ENCODE measurements at regions of chr1 and their contacts with region 1.

Region 1: GRCh38 chr1:23964790-23965740 is 5.4 kb downstream of the PNRC2 start:
- DNase-seq: no peak
- H3K4me3 Mint-ChIP-seq: peak overlapping the region; percentile 12
- H3K27ac Mint-ChIP-seq: peak overlapping the region; percentile 84
- H3K4me1 Mint-ChIP-seq: peaks cover 69% of the 10 kb centered on the region
- H3K27me3 Mint-ChIP-seq: no peaks in the 10 kb centered on the region

Region 2: GRCh38 chr1:23854568-23854967 is 110.5 kb before region 1 on chr1:
- CTCF ChIA-PET with region 1: no interaction called
- POLR2A ChIA-PET with region 1: no interaction called
- intact Hi-C with region 1: no loop called
- DNase-seq: no peak
- H3K4me3 Mint-ChIP-seq: no peak overlapping the region
- H3K27ac Mint-ChIP-seq: no peak overlapping the region
- H3K4me1 Mint-ChIP-seq: no peaks in the 10 kb centered on the region
- H3K27me3 Mint-ChIP-seq: no peaks in the 10 kb centered on the region

Region 3: DNA sequence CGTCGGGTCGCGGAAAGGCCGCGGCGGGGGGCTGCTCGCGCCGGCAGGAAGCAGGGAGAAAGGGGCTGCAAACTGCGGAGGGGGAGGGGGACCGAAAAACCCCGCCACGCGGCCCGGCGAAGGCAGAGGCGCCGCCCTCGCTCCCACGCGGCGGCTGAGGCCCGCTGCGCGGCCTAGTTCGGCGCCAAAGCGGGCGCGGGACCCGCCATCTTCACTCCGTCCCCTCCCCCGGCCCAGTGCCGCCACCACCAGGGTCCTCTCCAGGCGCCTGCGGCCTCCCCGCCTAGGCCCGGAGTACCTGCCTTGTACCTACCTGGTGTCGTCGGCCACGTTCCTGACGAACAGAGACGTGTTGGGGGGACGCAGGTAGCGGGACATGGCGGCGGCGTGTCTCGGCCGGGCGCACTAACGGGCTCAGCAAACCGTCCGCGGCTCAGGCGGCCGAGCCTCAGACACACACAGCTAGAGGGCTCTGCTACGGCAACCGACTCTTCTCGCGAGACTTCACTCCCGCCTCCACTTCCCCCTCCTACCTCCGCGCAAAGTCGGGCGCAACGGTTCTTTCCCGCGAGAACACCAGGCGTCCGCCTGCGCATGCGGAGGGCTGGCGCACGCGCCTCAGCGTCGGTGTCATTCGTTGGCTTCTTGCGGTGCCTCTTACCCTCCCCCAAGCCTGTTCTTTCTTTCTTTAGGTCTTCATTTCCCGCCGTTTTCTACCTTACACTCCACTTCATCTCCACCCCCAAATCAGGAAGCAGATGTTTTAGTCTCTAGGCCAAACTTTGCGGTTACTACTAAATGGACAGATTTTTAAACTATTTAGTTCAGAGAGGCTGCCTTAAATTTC is 15.0 kb after region 1 on chr1 and contains the start of gene SRSF10:
- CTCF ChIA-PET with region 1: interaction called, 7 read pairs
- POLR2A ChIA-PET with region 1: interaction called, 70 read pairs
- intact Hi-C with region 1: loop called (anchors 1 kb)
- DNase-seq: peak; percentile 99
- H3K4me3 Mint-ChIP-seq: peak within 1 kb of the TSS; percentile 92
- H3K27ac Mint-ChIP-seq: peak within 1 kb of the TSS; percentile 100
- H3K4me1 Mint-ChIP-seq: peaks cover 40% of the 10 kb centered on the region
- H3K27me3 Mint-ChIP-seq: no peaks in the 10 kb centered on the region
- total RNA-seq, gene SRSF10: 175 to 184 TPM

Region 4: DNA sequence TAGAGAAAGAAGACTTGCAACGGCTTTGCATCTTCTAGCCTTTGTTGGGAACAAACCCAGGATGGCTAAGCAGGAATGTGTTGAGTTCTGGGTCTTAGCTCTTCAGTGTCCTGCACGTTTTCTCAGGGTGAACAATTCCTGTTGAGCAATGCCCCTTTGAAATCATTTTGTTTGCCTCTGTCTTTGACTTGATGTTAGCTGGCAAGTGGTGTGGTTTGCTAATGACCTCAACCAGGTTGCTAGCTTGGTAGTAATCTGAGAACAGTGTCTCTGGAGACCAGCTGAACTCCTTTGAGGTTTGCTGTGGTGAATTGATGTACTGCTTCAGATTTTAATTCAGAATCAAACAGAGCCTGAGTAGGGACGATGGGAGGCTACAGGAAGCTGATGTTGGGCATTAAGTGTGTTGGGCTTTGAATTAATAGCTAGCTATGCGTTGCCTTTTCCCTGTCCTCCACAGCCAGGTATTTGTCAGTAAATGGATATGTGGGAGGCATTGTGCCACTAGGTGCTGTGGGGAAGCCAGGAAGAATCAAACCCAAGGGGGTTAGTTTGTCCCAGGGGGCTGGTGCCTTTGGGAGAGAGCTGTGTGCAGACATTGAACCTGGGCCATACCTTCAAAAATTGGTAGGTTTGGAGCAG is 38.4 kb after region 1 on chr1:
- CTCF ChIA-PET with region 1: no interaction called
- POLR2A ChIA-PET with region 1: no interaction called
- intact Hi-C with region 1: no loop called
- DNase-seq: no peak
- H3K4me3 Mint-ChIP-seq: no peak overlapping the region
- H3K27ac Mint-ChIP-seq: no peak overlapping the region
- H3K4me1 Mint-ChIP-seq: peaks cover 5% of the 10 kb centered on the region
- H3K27me3 Mint-ChIP-seq: peaks cover 13% of the 10 kb centered on the region

Measured in activated CD4-positive, alpha-beta memory T cell treated with anti-CD3 and anti-CD28 coated beads for 36 hours (primary cell).